ENCODE measurements at regions of chr2 and their contacts with region 1.

Region 1: DNA sequence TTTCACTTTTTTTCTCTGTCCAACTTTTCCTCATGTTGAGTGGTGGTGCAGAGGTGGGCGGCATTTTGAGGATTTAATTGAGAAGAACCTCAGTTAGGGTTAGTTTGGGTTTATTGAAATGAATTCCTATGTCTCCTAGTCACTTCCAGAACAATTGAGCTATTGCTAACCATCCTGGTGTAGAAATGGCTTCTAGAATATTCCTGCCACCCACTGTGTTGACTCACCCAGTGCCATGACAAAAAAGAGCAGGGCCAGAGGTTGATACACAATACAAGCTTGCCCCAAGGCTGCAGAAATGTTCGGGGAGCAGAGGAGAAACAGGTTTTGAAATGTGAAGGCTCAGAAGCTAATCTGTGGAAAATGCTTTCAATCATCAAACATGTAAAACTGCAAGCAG is 167.1 kb upstream of the TRIB2 start:
- DNase-seq: peak; percentile 55
- H3K4me3 Mint-ChIP-seq: no peak overlapping the region
- H3K27ac Mint-ChIP-seq: no peak overlapping the region
- H3K4me1 Mint-ChIP-seq: peaks cover under 1% of the 10 kb centered on the region
- H3K27me3 Mint-ChIP-seq: no peaks in the 10 kb centered on the region
- CTCF ChIP-seq: no peak

Region 2: DNA sequence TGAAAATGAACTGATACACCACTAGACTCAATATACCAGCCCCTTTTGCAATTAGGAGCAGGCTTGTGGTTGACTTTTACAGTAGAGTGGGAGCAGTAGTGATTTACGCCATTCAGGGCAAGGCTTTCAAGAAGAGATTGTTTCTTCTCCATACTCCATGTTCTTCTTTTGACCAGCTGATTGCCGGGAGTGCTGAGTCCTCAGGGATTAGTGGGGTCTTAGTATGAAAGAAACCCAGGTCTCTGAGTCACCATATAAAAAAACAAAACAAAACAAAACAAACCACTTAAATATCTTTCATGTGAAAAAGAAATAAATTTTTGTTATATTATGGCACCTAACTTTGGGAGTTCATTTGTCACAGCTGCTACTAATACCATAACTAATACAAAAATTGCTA is 298.5 kb before region 1 on chr2:
- CTCF ChIA-PET with region 1: no interaction called
- POLR2A ChIA-PET with region 1: no interaction called
- intact Hi-C with region 1: no loop called
- DNase-seq: no peak
- H3K4me3 Mint-ChIP-seq: no peak overlapping the region
- H3K27ac Mint-ChIP-seq: no peak overlapping the region
- H3K4me1 Mint-ChIP-seq: no peaks in the 10 kb centered on the region
- H3K27me3 Mint-ChIP-seq: no peaks in the 10 kb centered on the region
- CTCF ChIP-seq: no peak

Region 3: DNA sequence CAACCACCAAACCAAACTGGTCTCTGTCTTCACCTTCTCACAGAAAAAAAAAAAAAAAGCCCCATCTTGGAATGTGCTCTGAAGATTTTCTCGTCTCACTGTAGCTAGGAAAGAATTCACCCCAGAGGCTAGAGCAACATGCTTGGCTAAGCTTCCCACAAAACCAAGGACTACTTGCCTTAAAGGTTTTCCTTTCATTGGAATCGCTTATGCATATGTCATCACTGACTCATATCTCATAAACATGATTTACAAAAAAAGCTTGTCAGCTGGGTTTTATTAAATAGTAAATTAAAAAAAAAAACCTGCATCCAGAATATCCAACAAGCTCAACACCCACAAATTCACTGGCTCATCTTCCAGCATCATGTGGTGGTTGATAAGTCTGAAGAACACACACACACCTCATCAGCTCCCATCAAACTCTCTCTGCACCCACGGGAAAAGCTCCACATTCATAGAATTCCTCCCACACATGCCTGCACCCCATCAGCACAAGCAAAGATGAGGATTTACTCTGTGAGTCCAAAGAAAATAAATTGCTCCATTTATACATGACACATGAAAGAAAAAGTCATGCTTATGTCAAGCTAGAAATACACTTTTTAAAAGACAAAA is 14.9 kb before region 1 on chr2:
- CTCF ChIA-PET with region 1: interaction called, 4 read pairs
- POLR2A ChIA-PET with region 1: interaction called, 13 read pairs
- intact Hi-C with region 1: no loop called
- DNase-seq: peak; percentile 77
- H3K4me3 Mint-ChIP-seq: peak overlapping the region; percentile 1
- H3K27ac Mint-ChIP-seq: peak overlapping the region; percentile 75
- H3K4me1 Mint-ChIP-seq: peaks cover 22% of the 10 kb centered on the region
- H3K27me3 Mint-ChIP-seq: no peaks in the 10 kb centered on the region
- CTCF ChIP-seq: no peak